ENCODE measurements at regions of chr11 and their contacts with region 1.

Region 1: DNA sequence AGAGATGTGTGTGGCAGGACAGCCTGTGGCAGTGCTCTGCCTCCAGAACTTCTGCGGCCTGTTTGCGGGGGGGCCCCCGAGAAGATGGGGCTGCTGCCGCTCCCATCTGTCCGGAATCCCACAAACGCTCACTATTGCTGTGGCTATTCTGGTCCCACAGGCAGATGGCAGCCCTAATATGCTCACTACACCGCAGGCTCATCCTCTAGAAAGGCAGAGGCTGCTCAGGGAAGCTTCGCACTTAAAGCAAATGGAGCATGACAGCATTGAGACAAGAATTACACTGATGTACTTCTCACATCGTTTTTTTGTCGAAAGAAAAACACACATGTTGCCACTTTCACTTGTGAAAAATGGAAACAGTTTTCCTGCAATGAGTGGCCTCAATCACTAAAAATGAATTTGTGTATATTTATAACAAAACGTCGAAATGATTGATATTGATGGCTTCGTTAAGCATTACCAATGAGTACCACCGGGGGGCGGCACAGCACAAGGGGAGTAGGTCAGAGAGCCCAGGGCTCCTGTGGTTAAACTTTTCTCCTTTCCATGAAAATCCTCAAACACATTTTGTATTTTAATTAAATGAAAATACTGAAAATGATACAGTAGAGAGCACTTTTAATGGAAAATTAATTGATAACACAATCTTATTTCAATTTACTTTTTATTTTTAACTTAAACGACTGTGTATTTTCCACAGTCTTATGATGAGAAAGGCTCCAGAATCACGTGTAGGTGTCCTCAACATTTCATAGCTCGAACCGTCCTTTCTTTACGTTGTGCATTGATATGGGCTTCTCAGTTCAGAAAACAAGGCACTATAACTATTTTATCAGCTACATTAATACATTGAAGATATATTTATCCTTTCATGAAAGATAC is 69.1 kb downstream of the CTTN start:
- DNase-seq: peak; percentile 66 to 82 (median 75)
- ATAC-seq: peak; percentile 52; the same call in 2 of the 3 replicates
- H3K4me3 ChIP-seq: no peak overlapping the region
- H3K27ac ChIP-seq: no peak overlapping the region
- H3K4me1 ChIP-seq: peaks cover 3 to 16% of the 10 kb centered on the region in 2 experiments; a peak in 3 of 5 replicates
- H3K27me3 ChIP-seq: peaks cover under 1 to 16% of the 10 kb centered on the region in 2 experiments; a peak in 3 of 5 replicates
- CTCF ChIP-seq: peak; percentile 83 to 89 (median 88)
- EP300 ChIP-seq: no peak
- POLR2A ChIP-seq: no peak
- RAD21 ChIP-seq: peak; percentile 82 to 83

Region 2: GRCh38 chr11:69918938-69919650 is 548.3 kb before region 1 on chr11:
- CTCF ChIA-PET with region 1: interaction called, 7 read pairs
- POLR2A ChIA-PET with region 1: no interaction called
- in situ Hi-C with region 1: no loop called
- intact Hi-C with region 1: loop called (anchors 10 kb)
- DNase-seq: peak; percentile 79 to 87 (median 82)
- ATAC-seq: peak; percentile 92
- H3K4me3 ChIP-seq: no peak overlapping the region
- H3K27ac ChIP-seq: no peak overlapping the region
- H3K4me1 ChIP-seq: peaks cover 0 to 43% of the 10 kb centered on the region in 2 experiments; a peak in 2 of 5 replicates
- H3K27me3 ChIP-seq: peaks cover 12 to 48% of the 10 kb centered on the region in 2 experiments; a peak in 4 of 5 replicates
- CTCF ChIP-seq: peak; percentile 88 to 91 (median 90)
- EP300 ChIP-seq: 0 out of 2 replicates have a peak, but pooled peaks have one; percentile 7
- POLR2A ChIP-seq: no peak
- RAD21 ChIP-seq: peak; percentile 84 to 93

Region 3: GRCh38 chr11:70244698-70245097 is 222.7 kb before region 1 on chr11:
- CTCF ChIA-PET with region 1: no interaction called
- POLR2A ChIA-PET with region 1: no interaction called
- in situ Hi-C with region 1: no loop called
- intact Hi-C with region 1: no loop called
- DNase-seq: no peak
- ATAC-seq: no peak
- H3K4me3 ChIP-seq: no peak overlapping the region
- H3K27ac ChIP-seq: no peak overlapping the region
- H3K4me1 ChIP-seq: peaks cover 4 to 13% of the 10 kb centered on the region in 2 experiments; a peak in 3 of 5 replicates
- H3K27me3 ChIP-seq: peaks cover 24 to 60% of the 10 kb centered on the region in 2 experiments
- CTCF ChIP-seq: no peak
- EP300 ChIP-seq: no peak
- POLR2A ChIP-seq: no peak
- RAD21 ChIP-seq: no peak

Region 4: DNA sequence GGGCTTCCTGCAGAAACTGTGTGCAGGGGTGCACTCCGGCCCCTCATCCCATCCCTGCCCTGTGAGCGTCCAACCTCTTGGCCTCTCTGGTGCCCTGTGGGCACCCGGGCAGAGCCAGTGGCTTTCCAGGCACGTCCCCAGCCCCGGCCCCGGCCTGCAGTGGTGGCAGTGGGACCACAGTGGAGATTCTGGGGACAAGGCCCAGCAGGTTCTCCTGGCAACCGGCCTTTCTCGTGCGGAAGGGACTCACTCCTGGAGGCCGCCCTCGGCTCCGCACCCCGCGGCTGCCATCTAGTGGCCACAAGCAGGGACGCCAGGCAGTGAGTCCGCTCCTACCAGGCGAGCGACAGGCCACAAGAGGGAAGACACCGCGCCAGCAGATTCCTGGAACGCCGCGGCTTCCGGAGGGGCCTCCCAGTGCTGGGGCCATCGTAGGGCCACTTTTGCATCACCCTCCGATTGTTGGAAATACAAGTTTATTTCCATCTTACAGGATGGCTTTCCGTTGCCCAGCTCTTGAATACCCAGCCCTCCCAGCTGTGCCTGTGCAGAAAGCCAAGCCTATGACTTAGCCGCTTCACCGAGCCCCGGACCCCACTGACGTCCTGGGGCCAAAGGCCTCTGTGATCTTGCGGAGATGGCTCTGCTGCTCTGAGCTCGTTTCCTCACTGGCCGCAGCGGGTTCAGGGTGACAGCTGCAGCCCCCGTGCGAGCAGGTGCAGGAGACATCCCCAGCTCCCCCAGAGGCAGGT is 288.1 kb after region 1 on chr11:
- CTCF ChIA-PET with region 1: interaction called, 7 read pairs
- POLR2A ChIA-PET with region 1: no interaction called
- in situ Hi-C with region 1: no loop called
- intact Hi-C with region 1: loop called (anchors 5 kb)
- DNase-seq: peak; percentile 74 to 90 (median 88)
- ATAC-seq: peak; percentile 100
- H3K4me3 ChIP-seq: no peak overlapping the region
- H3K27ac ChIP-seq: no peak overlapping the region
- H3K4me1 ChIP-seq: peaks cover 0 to 9% of the 10 kb centered on the region in 2 experiments; a peak in 1 of 5 replicates
- H3K27me3 ChIP-seq: peaks cover 0 to 26% of the 10 kb centered on the region in 2 experiments; a peak in 4 of 5 replicates
- CTCF ChIP-seq: peak; percentile 85 to 98 (median 91)
- EP300 ChIP-seq: no peak
- POLR2A ChIP-seq: no peak
- RAD21 ChIP-seq: peak; percentile 68 to 84

Region 5: GRCh38 chr11:71080239-71081097 is 613.0 kb after region 1 on chr11:
- CTCF ChIA-PET with region 1: interaction called, 8 read pairs
- POLR2A ChIA-PET with region 1: no interaction called
- in situ Hi-C with region 1: no loop called
- intact Hi-C with region 1: loop called (anchors 1 kb)
- DNase-seq: peak; percentile 60 to 82 (median 70)
- ATAC-seq: peak; percentile 98
- H3K4me3 ChIP-seq: no peak overlapping the region
- H3K27ac ChIP-seq: no peak overlapping the region
- H3K4me1 ChIP-seq: no peaks in the 10 kb centered on the region
- H3K27me3 ChIP-seq: peaks cover 0 to 27% of the 10 kb centered on the region in 2 experiments; a peak in 2 of 5 replicates
- CTCF ChIP-seq: peak; percentile 92 to 99 (median 99)
- EP300 ChIP-seq: no peak
- POLR2A ChIP-seq: no peak
- RAD21 ChIP-seq: peak; percentile 23 to 65; a peak in 3 of 4 replicates